ENCODE measurements at regions of chrX and their contacts with region 1.

Region 1: GRCh38 chrX:48945516-48946348 is 11.7 kb downstream of the OTUD5 start:
- DNase-seq: peak; percentile 65
- ATAC-seq: peak; percentile 65
- H3K4me3 ChIP-seq: no peak overlapping the region
- H3K4me3 Mint-ChIP-seq: no peak overlapping the region
- H3K27ac ChIP-seq: no peak overlapping the region
- H3K27ac Mint-ChIP-seq: peak overlapping the region; percentile 20
- H3K4me1 ChIP-seq: peaks cover 23 to 39% of the 10 kb centered on the region in 2 donors
- H3K4me1 Mint-ChIP-seq: peaks cover 43% of the 10 kb centered on the region
- H3K27me3 ChIP-seq: no peaks in the 10 kb centered on the region
- H3K27me3 Mint-ChIP-seq: no peaks in the 10 kb centered on the region
- CTCF ChIP-seq: peak; percentile 83

Region 2: GRCh38 chrX:48617542-48618340 is 328.0 kb before region 1 on chrX:
- CTCF ChIA-PET with region 1: no interaction called
- POLR2A ChIA-PET with region 1: no interaction called
- intact Hi-C with region 1: no loop called
- DNase-seq: no peak
- ATAC-seq: no peak
- H3K4me3 ChIP-seq: no peak overlapping the region
- H3K4me3 Mint-ChIP-seq: no peak overlapping the region
- H3K27ac ChIP-seq: no peak overlapping the region
- H3K27ac Mint-ChIP-seq: no peak overlapping the region
- H3K4me1 ChIP-seq: no peaks in the 10 kb centered on the region
- H3K4me1 Mint-ChIP-seq: no peaks in the 10 kb centered on the region
- H3K27me3 ChIP-seq: no peaks in the 10 kb centered on the region
- H3K27me3 Mint-ChIP-seq: peaks cover 3% of the 10 kb centered on the region
- CTCF ChIP-seq: no peak

Region 3: DNA sequence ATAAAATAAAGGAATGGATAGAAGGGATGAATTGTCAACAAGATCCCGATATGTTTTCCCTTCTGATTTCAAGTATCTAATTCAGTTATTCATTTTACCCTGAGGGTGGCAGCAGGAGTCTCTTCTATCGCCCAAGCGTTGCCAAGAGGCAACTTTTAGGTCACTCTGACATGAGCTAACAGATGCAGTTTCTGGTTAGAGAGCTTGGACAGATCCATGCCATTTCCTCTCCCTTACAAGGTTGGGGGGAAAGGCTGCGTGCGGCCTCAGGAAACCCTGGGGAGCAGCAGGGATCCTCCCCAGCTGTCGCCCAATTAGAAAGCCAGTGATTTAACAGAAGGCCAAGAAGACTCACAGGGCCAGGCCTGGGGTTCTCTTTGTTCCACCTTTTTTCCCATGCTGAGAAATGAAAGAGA is 297.4 kb before region 1 on chrX:
- CTCF ChIA-PET with region 1: interaction called, 20 read pairs
- POLR2A ChIA-PET with region 1: no interaction called
- intact Hi-C with region 1: loop called (anchors 1 kb)
- DNase-seq: peak; percentile 60
- ATAC-seq: peak; percentile 73
- H3K4me3 ChIP-seq: no peak overlapping the region
- H3K4me3 Mint-ChIP-seq: no peak overlapping the region
- H3K27ac ChIP-seq: no peak overlapping the region
- H3K27ac Mint-ChIP-seq: peak overlapping the region; percentile 70
- H3K4me1 ChIP-seq: no peaks in the 10 kb centered on the region
- H3K4me1 Mint-ChIP-seq: no peaks in the 10 kb centered on the region
- H3K27me3 ChIP-seq: no peaks in the 10 kb centered on the region
- H3K27me3 Mint-ChIP-seq: no peaks in the 10 kb centered on the region
- CTCF ChIP-seq: peak; percentile 65

Region 4: GRCh38 chrX:48927736-48928382 is 17.9 kb before region 1 on chrX:
- CTCF ChIA-PET with region 1: interaction called, 3 read pairs
- POLR2A ChIA-PET with region 1: interaction called, 12 read pairs
- intact Hi-C with region 1: no loop called
- DNase-seq: peak; percentile 26
- ATAC-seq: peak; percentile 47
- H3K4me3 ChIP-seq: peak overlapping the region in 1 of 5 experiments; percentile 22
- H3K4me3 Mint-ChIP-seq: peak overlapping the region; percentile 59
- H3K27ac ChIP-seq: peak overlapping the region in 1 of 2 donors; percentile 17
- H3K27ac Mint-ChIP-seq: peak overlapping the region; percentile 74
- H3K4me1 ChIP-seq: peaks cover 29 to 35% of the 10 kb centered on the region in 2 donors
- H3K4me1 Mint-ChIP-seq: peaks cover 37% of the 10 kb centered on the region
- H3K27me3 ChIP-seq: no peaks in the 10 kb centered on the region
- H3K27me3 Mint-ChIP-seq: no peaks in the 10 kb centered on the region
- CTCF ChIP-seq: no peak